Activated CD4-positive, alpha-beta memory T cell treated with anti-CD3 and anti-CD28 coated beads, Interleukin-2, amount 10 ng/mL, durations not matched to agents 7 days and 5 days (primary cell): ENCODE measurements at regions of chr17 and their contacts with region 1.

Region 1: GRCh38 chr17:51000835-51001638 is 119.6 kb downstream of the SPAG9 start:
- DNase-seq: no peak
- H3K4me3 Mint-ChIP-seq: no peak overlapping the region
- H3K27ac Mint-ChIP-seq: no peak overlapping the region
- H3K4me1 Mint-ChIP-seq: no peaks in the 10 kb centered on the region
- H3K27me3 Mint-ChIP-seq: no peaks in the 10 kb centered on the region

Region 2: GRCh38 chr17:51056813-51057510 is 55.9 kb after region 1 on chr17:
- CTCF ChIA-PET with region 1: interaction called, 19 read pairs
- POLR2A ChIA-PET with region 1: no interaction called
- DNase-seq: peak; percentile 20
- H3K4me3 Mint-ChIP-seq: no peak overlapping the region
- H3K27ac Mint-ChIP-seq: no peak overlapping the region
- H3K4me1 Mint-ChIP-seq: no peaks in the 10 kb centered on the region
- H3K27me3 Mint-ChIP-seq: no peaks in the 10 kb centered on the region